MCF 10A (cell line): ENCODE measurements at regions of chr10 and their contacts with region 1.

Region 1: DNA sequence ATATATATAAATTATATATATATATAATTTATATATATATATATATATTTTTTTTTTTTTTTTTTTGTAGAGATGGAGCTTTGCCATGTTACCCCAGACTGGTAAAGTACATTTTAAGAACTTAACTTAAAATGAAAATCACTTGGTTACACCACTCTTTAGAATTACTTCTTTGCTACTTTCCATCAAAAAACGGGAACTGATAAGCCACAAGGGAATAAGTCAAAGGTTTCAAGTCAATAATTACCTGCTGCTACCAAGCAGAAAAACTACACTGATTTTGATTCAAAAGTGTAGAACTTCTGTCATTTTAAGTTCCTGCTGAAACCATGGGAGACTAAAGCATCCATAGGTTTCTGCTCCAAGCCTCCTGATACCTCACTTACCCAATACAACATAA is 12.2 kb downstream of the PPA1 start:
- DNase-seq: no peak
- H3K4me3 Mint-ChIP-seq: peak overlapping the region; percentile 45
- H3K27ac Mint-ChIP-seq: peak overlapping the region; percentile 87
- H3K4me1 Mint-ChIP-seq: peaks cover 32% of the 10 kb centered on the region
- H3K27me3 Mint-ChIP-seq: no peaks in the 10 kb centered on the region
- CTCF ChIP-seq: no peak

Region 2: GRCh38 chr10:70115948-70116682 is 104.9 kb before region 1 on chr10:
- CTCF ChIA-PET with region 1: interaction called, 15 read pairs
- POLR2A ChIA-PET with region 1: no interaction called
- intact Hi-C with region 1: no loop called
- DNase-seq: peak; percentile 68
- H3K4me3 Mint-ChIP-seq: no peak overlapping the region
- H3K27ac Mint-ChIP-seq: no peak overlapping the region
- H3K4me1 Mint-ChIP-seq: peaks cover 6% of the 10 kb centered on the region
- H3K27me3 Mint-ChIP-seq: no peaks in the 10 kb centered on the region
- CTCF ChIP-seq: peak; percentile 65

Region 3: DNA sequence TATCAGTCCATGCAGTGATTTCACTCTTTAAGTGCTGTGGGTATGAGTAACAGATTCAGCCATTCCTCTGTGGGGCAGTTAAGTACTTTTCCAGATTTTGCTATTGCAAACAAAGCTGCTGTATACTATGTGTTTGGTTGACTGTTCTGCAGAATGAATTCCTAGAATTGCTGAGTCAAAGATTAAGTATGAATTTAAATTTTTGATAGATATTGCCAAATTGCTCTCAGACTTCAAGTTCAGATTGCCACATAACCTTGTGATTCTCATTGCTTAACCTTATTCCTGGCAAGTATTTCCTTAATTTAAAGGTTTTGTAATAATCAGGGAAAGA is 29.1 kb before region 1 on chr10:
- CTCF ChIA-PET with region 1: interaction called, 11 read pairs
- POLR2A ChIA-PET with region 1: interaction called, 7 read pairs
- intact Hi-C with region 1: no loop called
- DNase-seq: peak; percentile 86
- H3K4me3 Mint-ChIP-seq: peak overlapping the region; percentile 16
- H3K27ac Mint-ChIP-seq: peak overlapping the region; percentile 73
- H3K4me1 Mint-ChIP-seq: peaks cover 41% of the 10 kb centered on the region
- H3K27me3 Mint-ChIP-seq: no peaks in the 10 kb centered on the region
- CTCF ChIP-seq: no peak

Region 4: GRCh38 chr10:70348228-70348850 is 127.3 kb after region 1 on chr10:
- CTCF ChIA-PET with region 1: interaction called, 14 read pairs
- POLR2A ChIA-PET with region 1: interaction called, 4 read pairs
- intact Hi-C with region 1: loop called (anchors 1 kb)
- DNase-seq: peak; percentile 76
- H3K4me3 Mint-ChIP-seq: no peak overlapping the region
- H3K27ac Mint-ChIP-seq: no peak overlapping the region
- H3K4me1 Mint-ChIP-seq: peaks cover 15% of the 10 kb centered on the region
- H3K27me3 Mint-ChIP-seq: no peaks in the 10 kb centered on the region
- CTCF ChIP-seq: peak; percentile 72

Region 5: DNA sequence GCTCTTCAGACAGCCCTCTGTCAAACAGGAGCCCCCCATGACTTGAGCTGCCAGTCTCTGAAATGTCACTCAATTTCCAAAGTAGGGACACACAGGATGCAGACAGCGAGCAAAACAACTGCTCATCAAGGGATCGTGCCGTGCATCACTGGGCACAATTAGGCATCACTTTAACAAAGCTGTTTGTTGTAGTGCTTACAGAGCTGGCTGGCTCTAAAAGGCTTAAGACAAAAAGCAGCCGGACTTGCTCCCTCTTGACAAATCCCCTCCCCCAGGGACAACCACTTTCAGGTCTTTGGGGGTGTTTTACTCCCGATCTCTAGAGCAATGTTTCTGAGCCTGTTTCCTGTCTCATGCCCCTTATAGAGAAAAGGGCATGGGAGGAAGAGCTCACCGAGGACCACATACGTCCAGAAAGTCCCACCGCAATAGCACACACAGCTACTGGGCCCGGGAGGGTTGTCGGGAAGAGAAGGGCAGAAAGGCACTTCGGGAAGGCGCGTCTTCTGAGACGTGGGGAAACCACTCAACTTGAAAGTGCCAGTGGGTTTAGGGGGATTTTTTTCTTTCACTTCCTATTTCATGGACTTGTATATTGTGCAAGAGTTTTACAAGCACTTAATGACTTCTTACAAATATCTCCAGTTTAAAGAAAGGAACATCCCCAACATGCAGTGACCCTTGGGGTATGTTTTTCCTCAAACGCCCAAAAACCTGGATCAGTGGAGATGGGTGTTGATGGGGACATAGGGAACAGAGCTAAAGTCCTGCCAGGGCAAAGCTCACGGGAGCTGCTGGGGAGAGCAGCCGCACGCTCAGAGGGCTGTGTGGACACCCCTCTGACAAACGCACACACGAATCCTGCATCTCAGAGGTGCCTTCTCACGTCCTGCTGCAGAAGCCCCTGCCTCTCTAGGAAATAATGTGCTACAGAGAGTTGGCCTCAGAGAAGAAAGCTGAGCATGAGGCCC is 134.3 kb after region 1 on chr10:
- CTCF ChIA-PET with region 1: interaction called, 232 read pairs
- POLR2A ChIA-PET with region 1: interaction called, 6 read pairs
- intact Hi-C with region 1: no loop called
- DNase-seq: no peak
- H3K4me3 Mint-ChIP-seq: no peak overlapping the region
- H3K27ac Mint-ChIP-seq: no peak overlapping the region
- H3K4me1 Mint-ChIP-seq: peaks cover 21% of the 10 kb centered on the region
- H3K27me3 Mint-ChIP-seq: no peaks in the 10 kb centered on the region
- CTCF ChIP-seq: no peak

Region 6: DNA sequence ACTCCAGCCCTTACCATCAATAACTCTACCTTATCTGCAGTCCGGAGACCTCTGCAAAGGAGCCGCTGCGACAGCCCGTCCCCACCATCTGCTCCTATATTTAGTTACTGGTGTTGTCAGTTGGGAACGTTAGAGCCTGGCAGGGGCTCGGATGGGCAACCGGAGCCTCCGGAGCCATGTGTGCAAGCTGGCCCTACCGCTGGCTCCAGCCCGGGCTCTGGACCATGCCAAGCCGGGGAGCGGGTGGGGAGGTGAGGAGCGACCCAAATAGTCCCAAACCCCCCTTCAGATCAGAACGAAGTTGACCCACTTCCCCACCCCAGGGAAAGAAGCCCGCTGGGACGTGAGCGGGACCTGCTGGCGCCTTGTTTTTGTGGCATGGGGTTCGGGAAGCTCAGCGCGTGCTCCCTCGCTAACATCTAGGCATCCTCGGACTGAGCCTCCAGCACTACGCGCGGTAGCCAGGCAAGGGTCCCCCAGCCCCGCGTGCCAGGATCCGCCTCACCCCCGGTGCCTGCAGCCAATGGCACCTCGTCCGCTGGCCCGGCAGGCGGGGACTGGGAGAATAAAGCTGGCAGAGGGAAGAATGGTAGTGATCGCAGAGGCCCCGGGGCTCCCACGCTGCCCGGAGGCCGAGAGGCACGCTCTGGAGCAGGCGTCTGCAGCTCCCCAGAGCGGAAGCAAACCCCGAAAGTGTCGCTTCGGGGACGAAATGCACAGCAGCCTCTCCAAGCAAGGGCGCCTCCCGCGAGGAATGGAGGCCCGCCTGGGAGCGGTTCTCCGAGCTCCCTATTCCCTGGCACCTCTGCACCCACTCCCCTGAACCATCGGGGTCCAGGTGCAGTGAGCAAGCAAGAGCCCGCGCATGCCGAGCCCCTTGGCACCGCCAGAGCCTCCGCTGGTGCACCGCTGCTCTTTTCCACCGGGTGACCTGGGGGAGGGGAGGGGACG is 160.7 kb after region 1 on chr10:
- CTCF ChIA-PET with region 1: interaction called, 21 read pairs
- POLR2A ChIA-PET with region 1: interaction called, 20 read pairs
- intact Hi-C with region 1: no loop called
- DNase-seq: no peak
- H3K4me3 Mint-ChIP-seq: peak overlapping the region; percentile 75
- H3K27ac Mint-ChIP-seq: no peak overlapping the region
- H3K4me1 Mint-ChIP-seq: peaks cover 20% of the 10 kb centered on the region
- H3K27me3 Mint-ChIP-seq: no peaks in the 10 kb centered on the region
- CTCF ChIP-seq: no peak

Region 7: GRCh38 chr10:70391654-70392053 is 170.6 kb after region 1 on chr10:
- CTCF ChIA-PET with region 1: interaction called, 18 read pairs
- POLR2A ChIA-PET with region 1: interaction called, 15 read pairs
- intact Hi-C with region 1: loop called (anchors 1 kb)
- DNase-seq: no peak
- H3K4me3 Mint-ChIP-seq: no peak overlapping the region
- H3K27ac Mint-ChIP-seq: no peak overlapping the region
- H3K4me1 Mint-ChIP-seq: peaks cover 10% of the 10 kb centered on the region
- H3K27me3 Mint-ChIP-seq: peaks cover 12% of the 10 kb centered on the region
- CTCF ChIP-seq: no peak